ENCODE measurements at regions of chr12 and their contacts with region 1.

Region 1: DNA sequence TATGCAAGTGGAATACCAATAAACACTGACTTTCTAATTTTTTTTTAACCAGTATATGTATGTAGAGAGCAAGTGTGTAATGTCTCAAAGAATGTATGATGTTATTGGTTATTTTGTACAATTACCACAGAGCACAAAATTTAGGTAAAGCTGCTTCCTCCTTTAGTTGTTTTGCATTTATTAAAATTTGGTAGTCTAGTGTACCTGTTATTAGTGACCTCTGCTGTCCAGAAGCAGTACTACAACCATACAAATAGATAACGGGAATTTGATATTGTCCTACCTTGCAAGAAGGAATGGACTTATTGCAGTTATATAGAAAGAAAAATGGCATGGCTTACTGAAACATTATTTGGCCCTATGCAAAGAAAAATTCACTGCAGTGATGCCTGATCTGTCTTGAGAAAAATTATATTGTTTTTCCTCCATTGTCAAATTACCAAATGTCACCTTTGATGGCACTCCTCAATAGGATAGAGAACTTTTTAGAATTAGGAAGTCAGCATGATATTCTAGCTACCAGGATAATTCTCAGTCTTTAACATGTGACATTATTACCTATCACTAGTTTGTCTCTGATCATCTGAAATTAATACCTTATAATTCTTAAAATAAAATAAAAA is 153.9 kb upstream of the RMST start:
- DNase-seq: no peak
- ATAC-seq: peak; percentile 49
- H3K4me3 Mint-ChIP-seq: no peak overlapping the region
- H3K27ac Mint-ChIP-seq: no peak overlapping the region
- H3K4me1 Mint-ChIP-seq: peaks cover 22% of the 10 kb centered on the region
- H3K27me3 Mint-ChIP-seq: peaks cover 23% of the 10 kb centered on the region
- CTCF ChIP-seq: peak; percentile 59

Region 2: DNA sequence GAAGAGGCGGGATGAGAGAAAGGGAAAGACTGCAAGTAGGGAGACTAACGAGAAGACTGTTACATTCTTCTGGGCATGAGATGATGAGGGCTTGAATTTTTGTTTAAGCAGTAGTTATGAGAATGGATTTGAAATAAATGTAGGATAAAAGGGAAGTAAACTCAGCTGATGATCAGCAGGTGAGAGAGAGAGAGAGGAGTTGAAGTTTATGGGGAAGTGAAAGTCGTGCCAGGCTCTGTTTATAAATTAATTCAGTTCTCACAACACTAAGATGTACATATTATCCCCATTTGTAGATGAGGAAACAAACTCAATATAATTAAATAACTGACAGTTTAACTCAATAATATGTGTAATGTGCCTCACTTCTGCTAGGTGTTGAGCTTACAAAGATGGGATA is 16.1 kb before region 1 on chr12:
- CTCF ChIA-PET with region 1: interaction called, 3 read pairs
- POLR2A ChIA-PET with region 1: no interaction called
- intact Hi-C with region 1: loop called (anchors 2 kb)
- DNase-seq: no peak
- ATAC-seq: peak; percentile 61
- H3K4me3 Mint-ChIP-seq: no peak overlapping the region
- H3K27ac Mint-ChIP-seq: peak overlapping the region; percentile 18
- H3K4me1 Mint-ChIP-seq: peaks cover 31% of the 10 kb centered on the region
- H3K27me3 Mint-ChIP-seq: no peaks in the 10 kb centered on the region
- CTCF ChIP-seq: no peak